ENCODE measurements at regions of chr5 and their contacts with region 1.

Region 1: DNA sequence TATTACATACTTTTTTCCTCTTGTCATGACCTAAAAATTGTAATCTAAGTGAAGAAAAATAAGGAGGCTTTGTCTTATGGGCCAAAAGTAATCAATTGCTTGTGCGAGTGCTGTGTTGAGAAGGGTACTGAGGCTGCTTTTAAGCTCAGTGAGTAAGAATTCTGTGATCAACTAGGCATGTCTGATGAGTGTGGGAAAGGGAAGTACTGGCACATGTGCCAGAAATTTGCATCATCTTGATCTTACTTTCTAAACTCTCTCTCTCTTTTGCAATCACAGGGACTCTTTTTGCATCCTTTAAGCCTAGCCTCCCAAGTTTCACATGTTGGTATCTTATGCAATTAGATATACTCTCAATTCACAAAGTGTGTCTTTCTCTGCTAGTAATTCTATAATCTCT is 329.9 kb downstream of the KIF4B start:
- DNase-seq: no peak
- ATAC-seq: no peak
- H3K4me3 ChIP-seq: no peak overlapping the region
- H3K27ac ChIP-seq: no peak overlapping the region
- H3K4me1 ChIP-seq: no peaks in the 10 kb centered on the region
- H3K27me3 ChIP-seq: no peaks in the 10 kb centered on the region
- CTCF ChIP-seq: no peak

Region 2: DNA sequence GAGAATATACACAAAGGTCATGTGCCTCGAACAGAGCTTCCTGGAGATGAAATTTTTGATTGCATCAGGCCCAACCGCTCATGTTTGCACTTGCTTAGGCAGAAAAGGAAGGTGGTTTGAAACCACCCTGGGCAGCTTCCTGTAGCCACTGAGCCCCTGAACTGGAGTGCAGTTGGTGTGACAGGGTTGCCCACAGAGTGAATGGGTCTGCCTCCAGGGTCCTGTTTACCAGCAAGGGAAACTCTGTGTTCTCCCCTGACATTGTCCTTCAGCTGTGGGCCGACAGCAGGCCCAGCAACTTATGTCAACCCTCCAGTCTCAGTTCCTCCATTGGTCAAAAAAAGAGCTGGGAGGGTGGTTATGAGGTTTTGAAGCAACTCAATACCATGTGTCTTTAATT is 40.3 kb before region 1 on chr5:
- intact Hi-C with region 1: no loop called
- DNase-seq: no peak
- ATAC-seq: no peak
- H3K4me3 ChIP-seq: no peak overlapping the region
- H3K27ac ChIP-seq: no peak overlapping the region
- H3K4me1 ChIP-seq: peaks cover 0 to 13% (median 5%) of the 10 kb centered on the region in 9 donors
- H3K27me3 ChIP-seq: no peaks in the 10 kb centered on the region
- CTCF ChIP-seq: no peak

Region 3: DNA sequence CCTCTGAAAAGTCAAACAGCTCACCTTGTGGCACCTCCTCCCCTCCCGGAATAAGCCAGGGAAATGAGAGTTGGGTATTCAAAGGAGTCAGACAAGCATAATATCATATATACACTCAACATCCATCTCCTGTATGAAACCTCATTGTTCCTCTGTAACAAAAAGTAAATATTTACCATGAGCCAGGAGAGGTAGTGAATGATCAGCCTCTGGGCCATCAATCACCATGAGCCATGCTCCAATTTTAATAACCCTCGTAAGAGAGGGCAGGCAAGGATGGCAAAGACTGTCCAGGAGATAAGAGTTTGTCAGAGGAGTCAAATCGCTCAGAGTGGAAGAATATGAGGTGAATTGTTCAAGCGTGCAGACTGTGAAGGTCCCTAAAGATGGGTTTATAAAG is 50.7 kb after region 1 on chr5:
- intact Hi-C with region 1: loop called in 1 of 10 experiments (anchors 2 kb)
- DNase-seq: no peak
- ATAC-seq: no peak
- H3K4me3 ChIP-seq: no peak overlapping the region
- H3K27ac ChIP-seq: no peak overlapping the region
- H3K4me1 ChIP-seq: no peaks in the 10 kb centered on the region
- H3K27me3 ChIP-seq: no peaks in the 10 kb centered on the region
- CTCF ChIP-seq: no peak